Activated CD4-positive, alpha-beta T cell treated with anti-CD3 and anti-CD28 coated beads for 36 hours (primary cell): ENCODE measurements at regions of chr18 and their contacts with region 1.

Region 1: DNA sequence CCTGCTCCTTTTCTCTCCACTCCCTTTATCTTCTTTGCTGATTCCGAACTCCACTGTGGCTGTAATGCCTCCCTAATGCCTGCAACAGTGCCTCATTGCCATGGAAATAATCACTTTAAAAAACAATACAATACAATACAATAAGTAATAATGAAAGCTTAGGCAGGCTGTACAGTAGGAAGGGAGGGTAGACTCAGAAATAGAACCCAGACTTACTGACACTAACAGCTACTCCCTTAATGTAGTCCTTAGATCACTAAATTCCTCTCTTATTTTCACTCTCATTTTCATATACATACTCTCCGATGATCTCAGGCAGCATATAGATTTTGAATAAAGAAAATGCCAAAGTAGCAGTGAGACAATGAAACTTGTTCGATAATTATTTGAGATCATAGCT is 70.2 kb downstream of the DLGAP1 start:
- DNase-seq: no peak
- ATAC-seq: no peak
- H3K4me3 Mint-ChIP-seq: no peak overlapping the region
- H3K27ac Mint-ChIP-seq: no peak overlapping the region
- H3K4me1 Mint-ChIP-seq: no peaks in the 10 kb centered on the region
- H3K27me3 Mint-ChIP-seq: no peaks in the 10 kb centered on the region

Region 2: GRCh38 chr18:4335386-4335785 is 49.5 kb before region 1 on chr18:
- CTCF ChIA-PET with region 1: no interaction called
- POLR2A ChIA-PET with region 1: no interaction called
- intact Hi-C with region 1: no loop called
- DNase-seq: no peak
- ATAC-seq: no peak
- H3K4me3 Mint-ChIP-seq: no peak overlapping the region
- H3K27ac Mint-ChIP-seq: no peak overlapping the region
- H3K4me1 Mint-ChIP-seq: no peaks in the 10 kb centered on the region
- H3K27me3 Mint-ChIP-seq: no peaks in the 10 kb centered on the region

Region 3: GRCh38 chr18:4369705-4370104 is 15.2 kb before region 1 on chr18:
- CTCF ChIA-PET with region 1: no interaction called
- POLR2A ChIA-PET with region 1: no interaction called
- intact Hi-C with region 1: loop called in 1 of 2 experiments (anchors 2 kb)
- DNase-seq: no peak
- ATAC-seq: no peak
- H3K4me3 Mint-ChIP-seq: no peak overlapping the region
- H3K27ac Mint-ChIP-seq: no peak overlapping the region
- H3K4me1 Mint-ChIP-seq: no peaks in the 10 kb centered on the region
- H3K27me3 Mint-ChIP-seq: no peaks in the 10 kb centered on the region

Region 4: GRCh38 chr18:4468511-4468910 is 83.6 kb after region 1 on chr18:
- CTCF ChIA-PET with region 1: no interaction called
- POLR2A ChIA-PET with region 1: no interaction called
- intact Hi-C with region 1: loop called in 1 of 2 experiments (anchors 10 kb)
- DNase-seq: no peak
- ATAC-seq: no peak
- H3K4me3 Mint-ChIP-seq: no peak overlapping the region
- H3K27ac Mint-ChIP-seq: no peak overlapping the region
- H3K4me1 Mint-ChIP-seq: no peaks in the 10 kb centered on the region
- H3K27me3 Mint-ChIP-seq: no peaks in the 10 kb centered on the region